Activated CD4-positive, alpha-beta T cell treated with anti-CD3 and anti-CD28 coated beads, Interleukin-2, amount 10 ng/mL, durations not matched to agents 24 days and 14 days (primary cell): ENCODE measurements at regions of chr4 and their contacts with region 1.

Region 1: GRCh38 chr4:98995183-98996055 is at the start of gene METAP1:
- DNase-seq: peak; percentile 98
- H3K4me3 Mint-ChIP-seq: peak within 1 kb of the TSS; percentile 89
- H3K27ac Mint-ChIP-seq: peak within 1 kb of the TSS; percentile 98
- H3K4me1 Mint-ChIP-seq: peaks cover 32% of the 10 kb centered on the region
- H3K27me3 Mint-ChIP-seq: peaks cover 3% of the 10 kb centered on the region
- total RNA-seq, gene METAP1: 61.2 and 63.3 TPM in 2 replicates

Region 2: DNA sequence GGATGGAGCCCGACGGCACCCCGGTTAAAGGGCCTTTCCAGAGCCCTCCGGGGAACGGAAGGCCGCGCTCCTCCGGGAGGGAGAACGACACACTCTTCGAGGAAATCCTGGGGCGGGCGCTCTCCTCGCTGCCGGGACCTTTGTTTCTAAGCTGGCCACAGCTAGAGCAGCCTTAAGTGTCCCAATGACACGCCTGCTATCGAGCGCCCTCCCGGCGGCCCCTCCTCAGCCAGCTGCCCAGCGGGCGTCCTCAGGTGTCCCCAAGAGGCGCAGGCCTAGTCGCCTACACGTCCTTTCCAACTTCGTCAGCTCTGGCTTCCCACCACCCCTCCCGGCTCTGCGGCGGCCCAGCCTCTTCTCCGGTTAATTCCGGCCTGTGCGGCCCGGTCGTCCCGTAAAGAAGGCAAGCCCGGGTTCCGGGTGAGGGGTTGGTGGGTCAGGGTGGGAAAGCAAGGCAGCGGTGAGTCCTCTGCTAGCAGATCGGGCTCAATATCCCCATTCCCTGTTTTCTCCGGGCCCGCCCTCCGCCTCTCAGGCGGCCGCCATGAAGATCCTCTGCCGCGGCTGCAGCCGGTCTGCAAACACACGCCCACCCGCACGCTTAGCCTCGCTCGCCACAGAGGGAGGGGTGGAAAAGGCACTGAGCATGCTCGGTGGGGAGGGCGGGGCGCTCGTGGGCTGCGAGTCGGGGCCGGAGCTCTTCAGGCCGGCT is 734.7 kb before region 1 on chr4:
- intact Hi-C with region 1: loop called (anchors 1 kb)
- DNase-seq: peak; percentile 97
- H3K4me3 Mint-ChIP-seq: peak overlapping the region; percentile 95
- H3K27ac Mint-ChIP-seq: peak overlapping the region; percentile 96
- H3K4me1 Mint-ChIP-seq: peaks cover 35% of the 10 kb centered on the region
- H3K27me3 Mint-ChIP-seq: peaks cover 4% of the 10 kb centered on the region

Region 3: GRCh38 chr4:98506462-98507132 is 488.8 kb before region 1 on chr4:
- intact Hi-C with region 1: no loop called
- DNase-seq: no peak
- H3K4me3 Mint-ChIP-seq: no peak overlapping the region
- H3K27ac Mint-ChIP-seq: no peak overlapping the region
- H3K4me1 Mint-ChIP-seq: peaks cover 54% of the 10 kb centered on the region
- H3K27me3 Mint-ChIP-seq: no peaks in the 10 kb centered on the region

Region 4: DNA sequence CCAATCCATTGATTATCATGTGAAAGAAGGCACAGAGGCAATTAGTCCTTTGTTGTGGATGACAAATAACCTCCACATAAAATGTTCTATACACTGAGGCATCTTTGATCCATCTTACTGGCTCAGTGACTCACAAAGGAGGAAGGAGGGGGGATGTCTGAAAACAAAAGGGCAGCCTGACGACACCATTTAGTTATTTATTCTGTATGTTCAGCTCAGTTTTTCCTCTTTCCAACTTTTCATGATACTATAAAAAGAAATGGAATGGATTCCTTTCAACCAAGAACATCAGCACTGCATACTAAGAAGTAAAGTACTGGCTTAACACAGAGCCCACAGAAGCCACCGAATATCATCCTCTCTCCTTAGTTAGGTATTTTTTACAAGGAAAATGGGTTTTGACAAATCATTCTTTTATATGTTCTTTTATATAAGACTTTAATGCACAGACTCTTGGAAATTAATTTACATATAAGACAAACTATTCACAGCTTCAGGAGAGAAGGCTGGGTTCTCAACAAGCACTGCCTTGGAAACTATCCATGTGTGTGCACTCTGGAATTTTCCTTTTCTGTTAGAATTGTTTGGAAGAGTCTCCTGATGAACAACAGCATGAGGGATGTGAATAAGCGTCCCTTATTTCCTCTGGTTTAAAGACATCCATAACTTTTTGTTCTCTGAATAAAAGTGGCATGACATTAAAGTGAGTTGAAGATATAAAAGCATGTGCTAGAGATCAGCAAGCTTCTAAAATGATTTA is 472.6 kb before region 1 on chr4:
- intact Hi-C with region 1: loop called (anchors 5 kb)
- DNase-seq: no peak
- H3K4me3 Mint-ChIP-seq: peak overlapping the region; percentile 4
- H3K27ac Mint-ChIP-seq: peak overlapping the region; percentile 77
- H3K4me1 Mint-ChIP-seq: peaks cover 42% of the 10 kb centered on the region
- H3K27me3 Mint-ChIP-seq: no peaks in the 10 kb centered on the region

Region 5: GRCh38 chr4:99054428-99054994 is 59.1 kb after region 1 on chr4:
- intact Hi-C with region 1: loop called (anchors 1 kb)
- DNase-seq: no peak
- H3K4me3 Mint-ChIP-seq: peak overlapping the region; percentile 27
- H3K27ac Mint-ChIP-seq: peak overlapping the region; percentile 79
- H3K4me1 Mint-ChIP-seq: peaks cover 34% of the 10 kb centered on the region
- H3K27me3 Mint-ChIP-seq: no peaks in the 10 kb centered on the region

Region 6: DNA sequence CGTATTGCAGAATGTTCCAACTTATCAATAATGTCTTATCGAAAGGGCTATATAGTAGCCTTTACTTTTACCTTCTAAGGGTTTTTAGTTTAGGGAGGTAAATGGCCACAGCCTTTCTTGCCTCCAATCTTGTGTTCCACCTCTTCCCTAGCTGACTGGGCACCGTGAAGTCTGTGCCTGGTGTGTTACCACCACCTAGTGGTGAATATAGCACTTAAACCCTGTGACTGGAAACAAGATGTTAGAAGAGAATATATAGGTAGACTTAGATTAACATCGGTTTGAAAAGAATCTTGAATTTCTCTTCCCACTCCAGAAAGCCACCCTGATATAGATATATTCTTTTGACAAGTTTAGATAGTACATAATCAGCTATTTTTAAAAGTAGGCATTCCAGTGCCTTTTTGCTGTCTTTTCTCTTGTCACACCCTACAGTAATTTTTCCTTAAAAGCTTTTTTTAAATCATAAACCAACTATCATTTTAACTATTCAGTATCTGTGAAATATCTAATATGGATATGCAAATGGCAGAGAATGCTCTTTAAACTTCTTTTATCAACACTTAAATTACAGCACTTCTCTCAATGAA is 467.6 kb after region 1 on chr4:
- intact Hi-C with region 1: loop called (anchors 5 kb)
- DNase-seq: peak; percentile 82
- H3K4me3 Mint-ChIP-seq: no peak overlapping the region
- H3K27ac Mint-ChIP-seq: no peak overlapping the region
- H3K4me1 Mint-ChIP-seq: no peaks in the 10 kb centered on the region
- H3K27me3 Mint-ChIP-seq: peaks cover 22% of the 10 kb centered on the region